H1 (cell line): ENCODE measurements at regions of chr15 and their contacts with region 1.

Region 1: GRCh38 chr15:90954712-90955671 is at the start of gene RCCD1:
- DNase-seq: peak; percentile 85 to 92
- H3K4me3 ChIP-seq: peak within 1 kb of the TSS; percentile 46 to 72 (median 58)
- H3K27ac ChIP-seq: peak within 1 kb of the TSS; percentile 92
- H3K4me1 ChIP-seq: peaks cover 0 to 15% (median 8%) of the 10 kb centered on the region in 4 experiments; a peak in 6 of 7 replicates
- H3K27me3 ChIP-seq: no peaks in the 10 kb centered on the region
- CTCF ChIP-seq: no peak
- EP300 ChIP-seq: no peak
- POLR2A ChIP-seq: peak; percentile 79 to 95
- RAD21 ChIP-seq: no peak
- total RNA-seq, gene RCCD1: 16.2 and 18.8 TPM in 2 replicates

Region 2: GRCh38 chr15:90902040-90902839 is 52.8 kb before region 1 on chr15:
- CTCF ChIA-PET with region 1: interaction called, 14 read pairs
- POLR2A ChIA-PET with region 1: interaction called, 5 read pairs
- DNase-seq: peak in 1 of 2 experiments; percentile 86
- H3K4me3 ChIP-seq: peak overlapping the region; percentile 52 to 77 (median 73)
- H3K27ac ChIP-seq: no peak overlapping the region
- H3K4me1 ChIP-seq: peaks cover 5 to 8% (median 7%) of the 10 kb centered on the region in 4 experiments; a peak in 6 of 7 replicates
- H3K27me3 ChIP-seq: peaks cover 0 to 16% (median 9%) of the 10 kb centered on the region in 4 experiments; a peak in 5 of 7 replicates
- CTCF ChIP-seq: peak; percentile 53 to 85 (median 81)
- EP300 ChIP-seq: no peak
- POLR2A ChIP-seq: no peak
- RAD21 ChIP-seq: no peak; a peak in 1 of 4 replicates

Region 3: DNA sequence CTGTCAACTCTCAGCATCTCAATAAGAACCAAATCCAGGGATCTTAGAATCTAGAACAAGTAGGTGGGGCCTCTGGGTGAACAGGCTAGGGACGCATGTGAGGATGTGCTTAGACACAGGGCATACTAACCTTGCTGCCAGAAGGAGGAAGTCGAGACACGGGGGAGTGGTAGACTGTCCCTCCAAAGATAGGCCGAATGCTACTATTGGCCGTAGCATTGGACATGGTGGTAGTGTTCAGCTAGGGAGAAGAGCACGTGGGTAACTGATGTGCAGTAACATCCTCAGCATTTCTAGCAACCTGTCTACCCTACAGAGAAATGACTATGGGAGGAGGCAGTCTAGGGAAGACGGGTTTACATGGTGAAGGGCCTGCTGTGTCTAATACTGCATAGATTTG is 15.3 kb after region 1 on chr15:
- CTCF ChIA-PET with region 1: interaction called, 17 read pairs
- POLR2A ChIA-PET with region 1: interaction called, 10 read pairs
- DNase-seq: no peak
- H3K4me3 ChIP-seq: no peak overlapping the region
- H3K27ac ChIP-seq: no peak overlapping the region
- H3K4me1 ChIP-seq: no peaks in the 10 kb centered on the region
- H3K27me3 ChIP-seq: no peaks in the 10 kb centered on the region
- CTCF ChIP-seq: no peak
- EP300 ChIP-seq: no peak
- POLR2A ChIP-seq: no peak
- RAD21 ChIP-seq: no peak

Region 4: DNA sequence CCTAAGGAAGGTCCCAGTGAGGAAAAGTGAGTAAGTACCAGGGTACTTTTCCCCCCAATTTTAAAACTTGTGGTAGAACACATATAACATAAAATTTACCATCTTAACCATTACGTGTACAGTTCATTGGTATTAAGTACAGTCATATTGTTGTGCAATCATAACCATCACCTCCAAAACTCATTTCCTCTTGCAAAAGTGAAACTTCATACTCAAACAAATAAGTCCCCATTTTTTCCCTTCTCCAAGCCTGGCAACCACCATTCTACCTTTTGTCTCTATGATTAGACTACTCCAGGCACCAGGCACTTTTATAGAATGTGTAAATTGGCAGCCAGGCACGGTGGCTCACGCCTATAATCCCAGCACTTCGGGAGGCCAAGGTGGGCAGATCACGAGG is 27.1 kb after region 1 on chr15:
- CTCF ChIA-PET with region 1: interaction called, 18 read pairs
- POLR2A ChIA-PET with region 1: interaction called, 10 read pairs
- DNase-seq: no peak
- H3K4me3 ChIP-seq: no peak overlapping the region
- H3K27ac ChIP-seq: no peak overlapping the region
- H3K4me1 ChIP-seq: no peaks in the 10 kb centered on the region
- H3K27me3 ChIP-seq: no peaks in the 10 kb centered on the region
- CTCF ChIP-seq: no peak
- EP300 ChIP-seq: no peak
- POLR2A ChIP-seq: no peak
- RAD21 ChIP-seq: no peak